Activated CD4-positive, alpha-beta memory T cell treated with anti-CD3 and anti-CD28 coated beads for 36 hours (primary cell): ENCODE measurements at regions of chr6 and their contacts with region 1.

Region 1: DNA sequence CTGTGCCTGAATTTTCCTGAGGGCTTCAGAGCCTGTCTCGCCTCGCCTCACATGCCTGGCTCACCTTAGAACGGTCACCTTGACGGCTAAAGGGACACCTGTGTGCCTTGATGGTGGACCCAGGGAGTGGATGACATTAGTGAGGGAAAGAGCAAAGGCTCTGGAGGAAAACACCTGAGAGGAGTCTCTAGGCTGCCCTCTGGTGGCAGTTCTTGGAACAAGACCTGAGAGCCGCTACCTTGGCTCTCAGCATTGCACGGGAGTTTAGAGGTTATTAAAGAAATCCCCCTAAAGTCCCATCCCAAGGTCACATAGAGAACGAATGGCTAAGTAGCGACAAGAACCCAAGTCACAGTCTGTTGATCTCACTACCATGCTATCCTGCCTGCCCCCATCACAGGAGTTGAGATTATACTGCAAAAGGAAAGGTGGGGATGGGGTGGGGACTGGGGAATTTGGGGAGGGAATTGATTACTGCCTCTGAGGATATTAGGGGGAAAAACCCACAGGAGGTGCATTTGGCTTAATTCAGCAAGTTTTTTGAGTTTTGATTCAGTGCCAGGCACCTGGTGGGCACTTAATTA is 7.9 kb upstream of the CDSN start:
- DNase-seq: peak; percentile 81
- H3K4me3 Mint-ChIP-seq: no peak overlapping the region
- H3K27ac Mint-ChIP-seq: no peak overlapping the region
- H3K4me1 Mint-ChIP-seq: peaks cover 2% of the 10 kb centered on the region
- H3K27me3 Mint-ChIP-seq: peaks cover 2% of the 10 kb centered on the region

Region 2: DNA sequence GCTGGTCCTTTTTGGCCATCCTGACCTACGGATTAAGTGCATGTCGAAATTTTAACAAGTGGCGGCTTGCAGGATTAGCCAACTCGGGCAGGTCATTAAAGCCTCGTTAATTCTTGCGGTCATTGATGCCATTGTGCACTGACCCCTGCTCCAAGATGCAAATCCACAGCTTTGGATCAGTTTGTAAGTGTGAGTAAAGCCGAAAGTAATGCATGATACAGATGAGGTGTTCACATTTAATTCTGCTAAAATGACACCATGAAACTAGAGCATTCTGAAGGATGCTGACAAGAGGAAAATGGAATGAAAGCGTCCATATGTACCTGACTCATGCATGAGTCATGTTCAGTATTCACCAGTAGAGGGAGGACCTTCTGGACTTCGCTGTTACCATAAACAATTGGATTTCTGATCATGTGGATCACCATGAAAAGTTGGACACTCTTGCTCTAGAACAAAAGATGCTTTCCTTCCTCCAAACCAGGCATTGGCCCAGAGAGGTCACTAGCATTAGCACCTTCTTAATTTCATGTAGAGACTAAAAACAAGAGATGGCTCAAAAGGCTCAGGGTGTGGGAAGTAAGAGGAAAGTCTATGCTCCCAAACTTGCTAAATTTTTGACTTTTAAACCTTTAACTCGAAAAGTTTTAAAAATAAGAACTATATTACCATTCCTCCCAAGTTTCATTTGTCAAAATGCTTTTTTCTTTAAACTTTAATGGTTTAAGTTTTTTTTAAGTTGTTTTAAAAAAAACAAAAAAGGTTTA is 69.9 kb before region 1 on chr6:
- CTCF ChIA-PET with region 1: no interaction called
- POLR2A ChIA-PET with region 1: no interaction called
- intact Hi-C with region 1: no loop called
- DNase-seq: no peak
- H3K4me3 Mint-ChIP-seq: no peak overlapping the region
- H3K27ac Mint-ChIP-seq: no peak overlapping the region
- H3K4me1 Mint-ChIP-seq: peaks cover 9% of the 10 kb centered on the region
- H3K27me3 Mint-ChIP-seq: peaks cover 6% of the 10 kb centered on the region

Region 3: DNA sequence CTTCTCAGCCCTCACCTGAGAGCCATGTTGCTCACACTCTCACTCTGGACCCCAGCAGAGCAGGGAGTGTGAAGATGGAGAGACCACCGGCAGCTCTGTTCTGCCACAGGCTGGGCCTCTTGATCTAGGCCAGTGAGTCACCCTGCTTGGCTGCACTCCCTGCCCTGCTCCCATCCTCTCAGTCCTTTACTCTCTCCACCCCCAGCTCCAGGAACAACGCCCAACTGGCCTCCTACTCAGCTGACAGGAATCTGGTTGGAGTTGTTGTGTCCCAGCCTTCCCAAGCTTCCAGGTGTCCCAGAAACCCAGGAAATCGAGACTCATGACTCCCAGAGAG is 13.7 kb before region 1 on chr6 and contains the start of gene PSORS1C1:
- CTCF ChIA-PET with region 1: interaction called, 10 read pairs
- POLR2A ChIA-PET with region 1: no interaction called
- intact Hi-C with region 1: no loop called
- DNase-seq: no peak
- H3K4me3 Mint-ChIP-seq: no peak within 1 kb of the TSS
- H3K27ac Mint-ChIP-seq: no peak within 1 kb of the TSS
- H3K4me1 Mint-ChIP-seq: peaks cover 2% of the 10 kb centered on the region
- H3K27me3 Mint-ChIP-seq: peaks cover 6% of the 10 kb centered on the region
- total RNA-seq, gene PSORS1C1: not detected

Region 4: DNA sequence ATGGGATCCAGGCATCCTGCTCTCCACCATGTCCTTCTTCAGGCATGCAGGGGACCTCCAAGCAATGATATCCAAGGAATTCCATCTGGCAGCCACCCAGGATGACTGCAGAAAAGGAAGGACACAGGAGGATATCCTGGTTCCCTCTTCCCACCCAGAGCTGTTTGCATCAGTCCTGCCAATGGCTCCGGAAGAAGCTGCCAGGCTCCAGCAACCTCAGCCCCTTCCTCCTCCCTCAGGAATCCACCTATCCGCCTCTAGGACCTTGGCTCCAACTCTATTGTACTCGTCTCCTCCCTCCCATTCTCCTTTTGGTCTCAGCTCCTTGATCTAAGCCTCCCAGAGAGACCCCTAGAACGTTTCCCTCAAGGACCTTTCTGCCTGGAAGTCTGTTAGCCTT is 11.4 kb after region 1 on chr6:
- CTCF ChIA-PET with region 1: interaction called, 12 read pairs
- POLR2A ChIA-PET with region 1: no interaction called
- intact Hi-C with region 1: no loop called
- DNase-seq: no peak
- H3K4me3 Mint-ChIP-seq: no peak overlapping the region
- H3K27ac Mint-ChIP-seq: no peak overlapping the region
- H3K4me1 Mint-ChIP-seq: peaks cover 3% of the 10 kb centered on the region
- H3K27me3 Mint-ChIP-seq: no peaks in the 10 kb centered on the region

Region 5: GRCh38 chr6:31351401-31352309 is 223.5 kb after region 1 on chr6:
- CTCF ChIA-PET with region 1: no interaction called
- POLR2A ChIA-PET with region 1: no interaction called
- intact Hi-C with region 1: no loop called
- DNase-seq: peak; percentile 22
- H3K4me3 Mint-ChIP-seq: peak overlapping the region; percentile 5
- H3K27ac Mint-ChIP-seq: peak overlapping the region; percentile 19
- H3K4me1 Mint-ChIP-seq: peaks cover 54% of the 10 kb centered on the region
- H3K27me3 Mint-ChIP-seq: no peaks in the 10 kb centered on the region